HCT116 (cell line): ENCODE measurements at regions of chr7 and their contacts with region 1.

Region 1: GRCh38 chr7:28062197-28062991 is 118.2 kb downstream of the JAZF1 start:
- DNase-seq: peak; percentile 27
- ATAC-seq: peak; percentile 99
- H3K4me3 ChIP-seq: no peak overlapping the region
- H3K27ac ChIP-seq: no peak overlapping the region
- H3K4me1 ChIP-seq: peaks cover 0 to 7% of the 10 kb centered on the region in 2 experiments; a peak in 2 of 4 replicates
- H3K27me3 ChIP-seq: no peaks in the 10 kb centered on the region
- CTCF ChIP-seq: peak; percentile 48 to 86 (median 84); a peak in 5 of 6 replicates
- POLR2A ChIP-seq: no peak
- RAD21 ChIP-seq: peak; percentile 59

Region 2: DNA sequence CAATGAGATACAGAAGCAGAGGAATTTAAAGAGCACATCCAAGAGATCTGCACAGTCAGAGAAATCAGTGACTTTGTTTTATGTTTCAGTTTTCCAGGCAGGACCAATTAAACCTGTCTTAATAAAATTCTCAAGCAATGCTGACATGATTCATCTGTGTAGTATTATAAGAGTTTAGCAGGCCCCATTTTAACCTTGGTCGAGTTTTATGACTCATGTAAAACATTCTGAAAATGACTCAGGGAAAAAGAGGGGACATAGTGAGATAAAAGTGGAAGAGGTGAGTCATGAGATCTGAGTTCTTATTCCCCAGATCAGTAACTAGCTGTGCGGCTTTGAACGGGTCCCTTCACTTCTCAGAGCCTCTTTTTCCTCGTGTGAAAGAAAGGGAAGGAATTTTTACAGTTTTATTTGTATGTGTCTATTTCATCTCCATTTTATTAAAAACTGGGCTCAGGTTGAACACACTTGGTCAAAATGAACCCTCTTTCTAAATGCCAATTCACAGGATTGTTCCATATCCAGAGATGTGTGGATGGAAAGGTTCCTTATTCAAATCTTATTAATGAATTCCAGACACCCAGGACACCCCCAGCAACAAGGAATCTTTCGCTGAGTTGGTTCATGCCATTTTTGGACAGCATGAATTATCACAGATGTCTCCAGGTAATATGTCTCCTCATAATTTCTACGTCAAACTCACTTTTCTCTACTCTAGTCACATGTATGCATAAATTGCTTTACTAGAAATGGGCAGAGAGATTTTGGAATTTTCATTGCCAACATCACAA is 25.0 kb before region 1 on chr7:
- CTCF ChIA-PET with region 1: interaction called, 18 read pairs
- POLR2A ChIA-PET with region 1: no interaction called
- RAD21 ChIA-PET with region 1: no interaction called
- intact Hi-C with region 1: no loop called
- DNase-seq: peak; percentile 97
- ATAC-seq: peak; percentile 80
- H3K4me3 ChIP-seq: peak overlapping the region; percentile 24 to 51
- H3K27ac ChIP-seq: peak overlapping the region; percentile 72
- H3K4me1 ChIP-seq: peaks cover 55 to 86% of the 10 kb centered on the region in 2 experiments
- H3K27me3 ChIP-seq: no peaks in the 10 kb centered on the region
- CTCF ChIP-seq: no peak
- POLR2A ChIP-seq: no peak
- RAD21 ChIP-seq: peak; percentile 10; the same call in 1 of the 2 replicates

Region 3: GRCh38 chr7:28078036-28078901 is 15.9 kb after region 1 on chr7:
- CTCF ChIA-PET with region 1: interaction called, 32 read pairs
- POLR2A ChIA-PET with region 1: no interaction called
- RAD21 ChIA-PET with region 1: no interaction called
- intact Hi-C with region 1: no loop called
- DNase-seq: peak; percentile 16
- ATAC-seq: peak; percentile 55
- H3K4me3 ChIP-seq: no peak overlapping the region
- H3K27ac ChIP-seq: no peak overlapping the region
- H3K4me1 ChIP-seq: no peaks in the 10 kb centered on the region
- H3K27me3 ChIP-seq: no peaks in the 10 kb centered on the region
- CTCF ChIP-seq: peak; percentile 49 to 99 (median 98); a peak in 5 of 6 replicates
- POLR2A ChIP-seq: no peak
- RAD21 ChIP-seq: peak; percentile 65

Region 4: GRCh38 chr7:28083164-28083997 is 21.0 kb after region 1 on chr7:
- CTCF ChIA-PET with region 1: interaction called, 32 read pairs
- POLR2A ChIA-PET with region 1: no interaction called
- RAD21 ChIA-PET with region 1: no interaction called
- intact Hi-C with region 1: no loop called
- DNase-seq: no peak
- ATAC-seq: no peak
- H3K4me3 ChIP-seq: no peak overlapping the region
- H3K27ac ChIP-seq: no peak overlapping the region
- H3K4me1 ChIP-seq: no peaks in the 10 kb centered on the region
- H3K27me3 ChIP-seq: no peaks in the 10 kb centered on the region
- CTCF ChIP-seq: no peak
- POLR2A ChIP-seq: no peak
- RAD21 ChIP-seq: no peak

Region 5: DNA sequence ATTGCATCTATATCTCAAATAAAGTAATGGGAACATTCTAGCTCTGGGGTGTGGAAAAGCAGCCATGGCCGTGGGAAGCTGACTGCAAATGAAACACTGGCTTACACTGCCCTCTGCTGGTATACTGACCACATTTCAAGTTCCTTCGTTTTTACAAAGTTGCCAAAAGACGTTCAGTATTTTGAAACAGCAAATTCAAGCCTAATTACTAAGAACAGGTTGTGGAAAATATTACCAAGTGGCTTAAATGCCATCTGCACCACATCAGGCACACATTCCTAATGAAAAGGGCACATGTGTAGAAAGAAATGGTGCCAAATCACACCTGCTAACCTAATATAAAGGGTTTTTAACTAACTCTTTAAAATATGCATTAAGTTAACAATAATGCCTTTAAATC is 34.3 kb after region 1 on chr7:
- CTCF ChIA-PET with region 1: interaction called, 33 read pairs
- POLR2A ChIA-PET with region 1: no interaction called
- RAD21 ChIA-PET with region 1: no interaction called
- intact Hi-C with region 1: no loop called
- DNase-seq: peak; percentile 42
- ATAC-seq: peak; percentile 74
- H3K4me3 ChIP-seq: no peak overlapping the region
- H3K27ac ChIP-seq: no peak overlapping the region
- H3K4me1 ChIP-seq: no peaks in the 10 kb centered on the region
- H3K27me3 ChIP-seq: no peaks in the 10 kb centered on the region
- CTCF ChIP-seq: peak; percentile 49 to 91 (median 70); a peak in 5 of 6 replicates
- POLR2A ChIP-seq: no peak
- RAD21 ChIP-seq: peak; percentile 77

Region 6: GRCh38 chr7:28272461-28272877 is 210.1 kb after region 1 on chr7:
- CTCF ChIA-PET with region 1: no interaction called
- POLR2A ChIA-PET with region 1: no interaction called
- RAD21 ChIA-PET with region 1: no interaction called
- intact Hi-C with region 1: loop called (anchors 1 kb)
- DNase-seq: peak; percentile 24
- ATAC-seq: peak; percentile 95
- H3K4me3 ChIP-seq: peak overlapping the region in 1 of 2 experiments; percentile 36; a peak in 2 of 4 replicates
- H3K27ac ChIP-seq: no peak overlapping the region
- H3K4me1 ChIP-seq: peaks cover 0 to 3% of the 10 kb centered on the region in 2 experiments; a peak in 1 of 4 replicates
- H3K27me3 ChIP-seq: no peaks in the 10 kb centered on the region
- CTCF ChIP-seq: peak; percentile 47 to 82 (median 71); a peak in 5 of 6 replicates
- POLR2A ChIP-seq: no peak
- RAD21 ChIP-seq: peak; percentile 59